K562 (cell line): ENCODE measurements at regions of chr3 and their contacts with region 1.

Region 1: GRCh38 chr3:17894434-17895060 is 152.1 kb upstream of the TBC1D5 start:
- DNase-seq: peak in 2 of 4 experiments; percentile 17 to 60
- ATAC-seq: peak; percentile 89
- H3K4me3 ChIP-seq: no peak overlapping the region
- H3K27ac ChIP-seq: no peak overlapping the region
- H3K4me1 ChIP-seq: peaks cover 0 to 7% of the 10 kb centered on the region in 2 experiments; a peak in 2 of 5 replicates
- H3K27me3 ChIP-seq: peaks cover 0 to 4% of the 10 kb centered on the region in 2 experiments; a peak in 1 of 5 replicates
- CTCF ChIP-seq: peak; percentile 51 to 68 (median 63)
- EP300 ChIP-seq: no peak
- POLR2A ChIP-seq: no peak
- RAD21 ChIP-seq: peak in 1 of 2 experiments; percentile 83; a peak in 3 of 4 replicates

Region 2: DNA sequence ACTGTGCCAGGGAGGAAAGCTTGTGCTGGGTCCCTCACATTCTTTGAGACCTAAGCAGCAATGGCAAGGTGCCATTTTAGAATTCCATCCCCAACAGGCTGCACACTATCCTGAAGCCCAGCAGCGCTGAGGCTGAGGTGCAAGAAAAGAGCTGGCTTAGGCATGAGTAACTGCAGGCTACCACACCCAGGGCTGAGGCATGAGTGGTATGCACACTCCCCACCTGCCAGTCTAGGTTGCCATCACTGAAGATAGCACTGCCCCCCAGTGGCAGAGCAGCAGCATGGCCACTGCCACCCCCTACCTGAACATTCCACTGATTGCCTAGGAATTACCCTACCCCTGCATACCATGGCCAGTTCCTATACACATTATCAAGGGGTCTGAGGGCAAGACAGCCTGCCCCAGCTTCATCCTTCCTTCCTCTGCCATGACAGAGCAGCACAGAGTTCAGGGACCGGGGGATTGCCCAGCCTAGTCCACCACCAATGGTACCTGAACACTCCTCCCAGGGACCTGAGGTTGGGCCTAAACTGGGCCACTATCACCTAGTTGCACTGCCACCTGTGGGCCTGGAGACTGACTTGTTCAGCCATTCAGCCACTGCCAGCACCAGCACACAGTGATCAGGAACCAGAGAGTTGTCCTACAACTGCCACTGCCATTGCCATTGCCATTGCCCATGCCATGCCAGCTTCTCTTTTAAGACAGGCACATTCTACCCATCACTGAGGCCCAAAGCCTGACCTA is 400.8 kb after region 1 on chr3:
- CTCF ChIA-PET with region 1: no interaction called
- POLR2A ChIA-PET with region 1: no interaction called
- in situ Hi-C with region 1: no loop called
- intact Hi-C with region 1: loop called (anchors 10 kb)
- DNase-seq: peak; percentile 9 to 30 (median 25)
- ATAC-seq: no peak; the same call in 2 of the 3 replicates
- H3K4me3 ChIP-seq: no peak overlapping the region
- H3K27ac ChIP-seq: no peak overlapping the region
- H3K4me1 ChIP-seq: no peaks in the 10 kb centered on the region
- H3K27me3 ChIP-seq: no peaks in the 10 kb centered on the region
- CTCF ChIP-seq: peak; percentile 7 to 50 (median 29); a peak in 3 of 6 replicates
- EP300 ChIP-seq: no peak
- POLR2A ChIP-seq: no peak
- RAD21 ChIP-seq: peak; percentile 9 to 66; a peak in 2 of 4 replicates

Region 3: GRCh38 chr3:18389108-18389733 is 494.7 kb after region 1 on chr3:
- CTCF ChIA-PET with region 1: no interaction called
- POLR2A ChIA-PET with region 1: no interaction called
- in situ Hi-C with region 1: no loop called
- intact Hi-C with region 1: loop called (anchors 1 kb)
- DNase-seq: peak in 2 of 4 experiments; percentile 16 to 37
- ATAC-seq: no peak
- H3K4me3 ChIP-seq: no peak overlapping the region
- H3K27ac ChIP-seq: no peak overlapping the region
- H3K4me1 ChIP-seq: no peaks in the 10 kb centered on the region
- H3K27me3 ChIP-seq: no peaks in the 10 kb centered on the region
- CTCF ChIP-seq: peak; percentile 13 to 59 (median 42); a peak in 5 of 6 replicates
- EP300 ChIP-seq: no peak
- POLR2A ChIP-seq: no peak
- RAD21 ChIP-seq: peak; percentile 47 to 64

Region 4: GRCh38 chr3:18758047-18758704 is 863.6 kb after region 1 on chr3:
- CTCF ChIA-PET with region 1: no interaction called
- POLR2A ChIA-PET with region 1: no interaction called
- in situ Hi-C with region 1: no loop called
- intact Hi-C with region 1: loop called (anchors 10 kb)
- DNase-seq: peak; percentile 14 to 42 (median 36)
- ATAC-seq: peak; percentile 52; the same call in 1 of the 3 replicates
- H3K4me3 ChIP-seq: no peak overlapping the region
- H3K27ac ChIP-seq: no peak overlapping the region
- H3K4me1 ChIP-seq: no peaks in the 10 kb centered on the region
- H3K27me3 ChIP-seq: no peaks in the 10 kb centered on the region
- CTCF ChIP-seq: peak; percentile 8 to 52 (median 37); a peak in 3 of 6 replicates
- EP300 ChIP-seq: no peak
- POLR2A ChIP-seq: no peak
- RAD21 ChIP-seq: peak; percentile 13 to 46; a peak in 3 of 4 replicates